ENCODE measurements at regions of chr2 and their contacts with region 1.

Region 1: GRCh38 chr2:130181325-130181879 is at the start of gene SMPD4:
- DNase-seq: peak; percentile 86 to 97
- H3K4me3 ChIP-seq: peak within 1 kb of the TSS; percentile 94
- H3K4me1 ChIP-seq: no peaks in the 10 kb centered on the region
- H3K27me3 ChIP-seq: no peaks in the 10 kb centered on the region

Region 2: DNA sequence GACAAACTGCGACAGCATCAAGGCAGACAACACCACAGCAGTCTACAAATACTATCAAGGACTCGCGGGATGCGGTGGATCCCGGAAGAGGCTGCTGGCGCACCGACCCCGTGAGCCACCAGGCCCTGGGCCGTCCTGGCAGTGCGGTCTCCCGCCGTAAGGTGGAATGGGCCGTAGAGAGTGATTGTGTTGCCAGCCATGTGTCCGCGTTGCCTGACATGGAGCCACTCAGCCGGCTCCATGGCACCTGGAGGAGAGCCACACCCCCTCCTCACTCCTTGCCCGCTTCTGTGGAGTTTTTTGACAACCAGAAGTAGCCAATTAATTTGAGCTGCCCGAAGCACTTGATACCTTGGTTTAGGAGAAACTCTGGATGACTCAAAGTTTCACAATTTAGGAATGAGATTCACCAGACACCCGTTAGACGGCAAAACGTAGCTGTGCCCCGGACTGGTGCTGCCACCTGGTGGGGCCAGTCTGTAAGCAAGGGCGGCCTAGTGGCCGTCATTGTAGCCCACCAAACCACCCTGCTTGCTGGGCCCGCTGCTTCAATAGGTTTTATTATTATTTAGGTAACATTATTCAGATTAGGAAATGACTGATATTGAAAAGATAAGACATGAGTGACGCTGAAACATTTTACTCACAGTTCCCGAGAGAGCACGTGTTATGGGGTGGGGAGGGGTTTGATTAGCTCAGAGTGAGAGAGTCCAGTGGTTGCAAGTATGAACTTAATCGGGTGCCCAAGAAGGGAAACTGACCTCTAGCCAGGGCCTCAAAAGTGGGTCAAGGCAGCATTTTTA is 151.1 kb after region 1 on chr2:
- in situ Hi-C with region 1: loop called (anchors 5 kb)
- DNase-seq: peak; percentile 57 to 83
- H3K4me3 ChIP-seq: no peak overlapping the region
- H3K4me1 ChIP-seq: no peaks in the 10 kb centered on the region; the same call in 1 of the 2 replicates
- H3K27me3 ChIP-seq: peaks cover 11% of the 10 kb centered on the region; the same call in 1 of the 2 replicates

Region 3: GRCh38 chr2:131093006-131093695 is 911.7 kb after region 1 on chr2 and contains the start of gene FAM168B:
- in situ Hi-C with region 1: loop called (anchors 25 kb)
- DNase-seq: peak; percentile 77 to 88
- H3K4me3 ChIP-seq: peak within 1 kb of the TSS; percentile 89
- H3K4me1 ChIP-seq: peaks cover 12% of the 10 kb centered on the region
- H3K27me3 ChIP-seq: no peaks in the 10 kb centered on the region